Left cardiac atrium (tissue), 4 donors: ENCODE measurements at regions of chr14 and their contacts with region 1.

Region 1: DNA sequence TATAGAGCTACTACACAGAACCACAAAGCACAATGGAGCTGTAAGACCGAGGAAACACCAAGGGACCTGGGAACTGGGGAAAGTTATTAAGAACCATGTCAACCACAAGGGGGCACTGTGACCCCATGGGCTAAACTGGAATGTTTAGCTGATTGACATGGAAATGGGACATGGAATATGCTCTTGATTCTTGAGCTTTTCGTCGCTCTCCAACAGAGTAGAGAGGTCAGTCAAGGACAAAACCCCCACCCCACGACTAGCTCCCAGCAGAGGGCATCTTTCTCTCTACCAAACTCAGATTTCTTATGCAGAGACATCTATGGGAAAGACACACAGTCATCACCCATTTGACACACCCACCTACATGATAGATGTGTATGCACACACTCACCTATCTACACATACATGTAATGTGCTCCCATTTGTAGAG is 10.1 kb downstream of the NDRG2 start:
- DNase-seq: peak; percentile 81
- ATAC-seq: peak; percentile 78 to 87

Region 2: DNA sequence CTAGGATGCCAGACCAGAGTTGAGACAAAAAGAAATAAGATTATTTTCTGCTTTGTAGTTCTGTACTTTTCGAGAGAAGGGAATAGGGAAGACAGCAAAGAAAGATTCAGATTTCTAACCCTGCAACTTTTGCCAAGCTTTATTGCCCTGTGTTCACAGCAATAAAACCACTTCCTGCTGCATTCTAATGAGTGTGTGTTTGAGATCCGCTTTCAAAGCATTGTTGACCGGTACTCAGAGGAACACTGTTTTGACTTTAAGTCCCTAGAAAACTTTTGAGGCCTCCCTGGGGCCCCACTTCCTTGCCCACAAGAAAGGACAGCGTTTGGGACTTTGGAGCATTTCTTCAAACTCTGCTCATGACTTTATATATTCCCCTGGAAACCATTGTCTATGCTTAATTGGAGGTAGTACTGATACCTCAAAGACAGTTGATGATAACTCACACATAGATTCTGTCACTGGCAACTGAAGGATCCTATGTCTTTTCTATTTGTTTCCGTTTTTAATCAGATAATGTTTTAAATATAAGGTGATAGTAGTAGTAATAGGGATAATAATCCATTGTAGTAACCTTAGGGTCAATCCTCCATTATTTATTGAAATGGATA is 232.4 kb before region 1 on chr14:
- intact Hi-C with region 1: no loop called
- DNase-seq: no peak
- ATAC-seq: peak; percentile 30 to 71

Region 3: DNA sequence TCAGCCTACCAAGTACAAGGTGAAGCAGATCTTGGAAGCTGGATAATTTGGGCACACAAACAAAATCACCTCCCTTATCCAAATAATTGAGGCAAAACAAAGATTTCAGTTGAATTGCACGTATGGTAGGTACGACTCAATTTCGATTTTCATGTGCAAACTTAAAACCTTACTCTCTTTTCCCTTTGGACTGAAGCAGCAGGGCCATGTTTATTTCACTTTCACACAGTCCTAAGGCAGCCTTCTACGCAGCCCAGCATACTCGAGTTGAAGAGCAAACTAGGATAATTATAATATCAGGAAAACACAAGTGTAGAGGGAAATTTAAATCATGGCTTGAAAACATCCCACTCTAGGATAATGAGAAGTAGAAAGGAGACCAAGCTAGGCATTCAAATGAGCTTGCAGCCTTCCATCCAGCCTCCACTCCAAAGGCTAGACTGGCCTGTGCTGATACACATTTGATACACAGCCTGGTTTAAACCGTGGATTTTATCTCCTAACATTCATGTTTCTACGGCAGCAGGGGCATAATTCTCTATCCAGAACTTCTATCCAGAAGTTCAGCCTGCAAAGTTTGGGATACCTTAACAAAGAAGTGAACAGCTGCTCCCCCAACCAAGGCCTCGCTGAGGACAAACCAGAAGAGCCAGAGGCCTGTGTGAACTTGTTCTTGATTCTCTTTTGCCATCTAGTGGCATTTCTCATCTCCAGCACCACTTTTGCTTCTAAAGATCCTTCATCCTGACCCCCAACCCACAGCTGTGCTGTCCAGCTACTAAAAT is 25.0 kb after region 1 on chr14:
- intact Hi-C with region 1: loop called (anchors 1 to 2 kb)
- DNase-seq: no peak
- ATAC-seq: peak; percentile 72 to 78

Region 4: DNA sequence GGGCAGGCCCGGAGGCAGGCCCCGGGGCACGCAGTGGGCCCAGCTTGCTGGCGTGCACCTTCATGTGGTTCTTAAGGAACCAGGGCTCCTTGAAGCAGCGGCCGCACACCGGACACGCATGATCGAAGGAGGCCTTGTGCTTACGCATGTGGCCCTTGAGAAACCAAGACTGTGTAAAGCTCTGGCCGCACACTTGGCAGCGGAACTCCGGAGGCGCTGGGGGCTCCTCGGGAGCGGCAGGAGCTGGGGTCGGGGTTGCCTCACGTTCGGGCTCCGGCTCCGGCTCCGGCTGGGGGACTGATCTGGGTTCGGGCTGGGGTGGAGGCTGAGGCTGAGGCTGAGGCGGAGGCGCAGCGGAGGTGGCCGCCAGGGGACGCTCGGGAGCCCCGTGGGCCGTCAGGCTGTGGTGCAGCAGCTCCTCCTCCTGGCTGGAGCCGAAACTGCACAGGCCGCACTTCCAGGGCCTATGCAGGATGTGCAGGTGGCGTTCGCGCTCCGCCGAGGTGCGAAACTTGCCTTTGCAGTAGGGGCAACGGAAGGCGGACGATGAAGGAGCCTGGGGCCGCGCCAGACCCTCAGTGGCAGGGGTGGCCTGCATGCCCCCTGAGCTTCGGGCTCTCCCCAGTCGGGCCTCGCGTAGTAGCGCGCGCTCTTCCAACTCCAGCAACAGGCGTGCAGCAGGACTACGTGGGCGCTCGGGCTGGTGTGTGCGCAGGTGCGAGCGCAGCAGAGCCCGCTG is 77.7 kb after region 1 on chr14:
- intact Hi-C with region 1: loop called (anchors 5 kb)
- DNase-seq: peak; percentile 87
- ATAC-seq: peak; percentile 72 to 76

Region 5: DNA sequence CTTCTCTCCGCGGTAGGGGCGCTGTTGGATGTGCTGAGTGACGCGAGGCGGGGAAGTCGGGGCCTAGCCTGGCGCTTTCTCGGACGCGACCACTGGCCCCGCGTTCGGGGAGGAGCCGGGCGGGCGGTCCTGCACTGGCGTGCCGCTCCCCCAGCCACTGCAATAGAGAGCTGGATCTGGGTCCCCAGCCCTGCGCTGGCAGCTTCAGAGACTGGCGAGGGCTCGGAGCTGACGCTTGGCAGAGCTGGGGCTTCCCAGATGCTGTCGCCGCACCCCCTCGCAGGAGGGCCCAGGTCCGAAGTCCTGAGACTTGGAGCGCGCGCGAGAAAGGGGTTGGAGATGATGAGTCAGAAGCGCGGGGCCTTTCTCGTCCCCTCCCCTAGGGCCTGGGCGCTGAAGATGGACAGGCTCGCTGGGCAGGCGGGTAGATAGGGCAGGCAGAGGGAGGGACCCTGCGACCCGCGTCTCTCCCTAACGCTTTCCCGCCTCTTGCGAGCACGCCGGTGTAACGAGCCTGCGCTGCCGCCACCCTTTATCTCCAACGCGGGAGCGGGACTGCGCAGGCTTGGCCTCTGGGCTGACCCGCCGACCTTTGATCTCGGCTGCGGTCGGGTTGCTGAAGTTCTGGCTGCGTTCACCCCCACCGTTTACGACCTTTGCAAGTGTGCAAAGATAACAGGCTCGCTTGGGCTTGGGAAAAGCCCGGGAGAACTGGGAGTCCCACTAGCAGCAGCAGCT is 89.1 kb after region 1 on chr14:
- intact Hi-C with region 1: loop called in 1 of 2 experiments (anchors 5 kb)
- DNase-seq: peak; percentile 97
- ATAC-seq: peak; percentile 93 to 96

Region 6: GRCh38 chr14:21145437-21145836 is 130.7 kb after region 1 on chr14:
- intact Hi-C with region 1: no loop called
- DNase-seq: no peak
- ATAC-seq: no peak